ENCODE measurements at regions of chr11 and their contacts with region 1.

Region 1: GRCh38 chr11:87290304-87290922 is 252.7 kb downstream of the TMEM135 start:
- DNase-seq: no peak

Region 2: DNA sequence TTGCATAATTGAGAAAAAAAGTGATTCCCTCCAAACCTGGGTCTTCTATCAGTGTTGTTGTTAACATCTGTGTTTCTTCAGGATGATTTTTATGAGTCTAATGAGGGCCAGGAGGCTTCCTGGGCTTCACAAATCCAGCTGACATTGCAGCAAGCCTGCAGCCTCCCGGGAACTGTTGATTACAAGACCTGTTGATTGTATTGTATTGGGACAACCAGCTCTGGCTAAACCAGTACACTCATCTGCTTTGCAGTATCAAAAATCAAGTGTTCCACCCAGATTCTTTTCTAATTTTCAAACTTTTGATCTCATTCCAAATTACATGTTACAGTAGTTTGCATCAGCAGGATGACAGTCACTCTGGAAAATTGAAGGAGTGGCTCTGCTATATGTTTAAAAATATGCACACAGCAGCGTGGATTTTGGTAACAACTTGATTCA is 506.2 kb before region 1 on chr11:
- intact Hi-C with region 1: no loop called
- DNase-seq: no peak

Region 3: GRCh38 chr11:86869966-86870570 is 420.3 kb before region 1 on chr11:
- intact Hi-C with region 1: loop called (anchors 10 kb)
- DNase-seq: peak in 7 of 10 donors; percentile 23 to 87 (median 52)

Region 4: DNA sequence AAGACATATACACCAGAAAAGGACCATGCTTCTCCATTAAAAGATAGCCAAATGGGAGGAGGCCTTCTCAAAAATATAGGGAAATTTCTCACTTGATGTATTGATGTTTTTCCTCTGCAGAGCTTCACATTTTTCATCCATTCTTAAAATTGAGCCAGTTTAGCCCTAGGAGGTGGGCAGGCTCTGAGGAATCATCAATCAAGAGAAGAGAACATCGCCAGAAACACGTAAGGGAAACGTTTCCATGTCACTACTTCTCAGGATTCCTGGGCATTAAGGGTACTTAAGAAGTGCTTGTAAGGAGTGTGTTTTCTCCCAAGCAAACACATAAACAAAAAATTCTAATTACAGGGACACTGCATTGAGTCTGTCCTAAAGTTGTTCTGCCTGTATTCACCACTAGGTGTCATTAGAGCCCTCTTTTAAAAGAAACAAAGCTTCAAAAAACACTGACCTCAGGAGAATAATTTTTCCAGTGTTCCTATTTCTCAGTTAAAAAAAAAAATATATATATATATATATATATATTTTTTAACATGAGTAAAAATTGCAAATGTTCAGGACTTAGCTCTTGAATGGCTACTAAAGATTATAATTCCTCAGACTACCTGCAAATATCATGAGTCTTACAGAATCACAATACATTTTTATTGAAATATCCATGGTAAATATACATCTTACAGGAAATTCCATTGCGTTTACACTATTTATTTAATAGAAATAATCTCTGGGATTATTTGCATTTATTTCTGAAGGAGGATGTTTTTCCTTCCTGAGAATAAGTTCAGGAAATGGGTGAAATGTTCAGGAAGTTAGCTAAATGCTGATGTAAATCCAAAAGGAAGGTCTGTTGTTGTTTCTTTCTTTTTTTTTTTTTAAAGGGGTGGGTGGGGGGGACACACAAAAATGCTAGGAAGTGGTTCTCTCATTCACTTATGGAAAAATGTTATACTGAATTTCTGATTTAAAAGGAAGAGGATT is 351.2 kb before region 1 on chr11:
- intact Hi-C with region 1: loop called (anchors 1 kb)
- DNase-seq: no peak

Region 5: GRCh38 chr11:86955361-86956120 is 334.9 kb before region 1 on chr11 and contains the start of gene FZD4:
- intact Hi-C with region 1: loop called (anchors 5 kb)
- DNase-seq: peak; percentile 71 to 98 (median 89)

Region 6: GRCh38 chr11:86999859-87000753 is 290.3 kb before region 1 on chr11:
- intact Hi-C with region 1: loop called (anchors 5 kb)
- DNase-seq: no peak

Region 7: GRCh38 chr11:87501388-87501787 is 211.0 kb after region 1 on chr11:
- intact Hi-C with region 1: no loop called
- DNase-seq: no peak

Measured in posterior cingulate gyrus (tissue), 11 donors.